PC-9 (cell line): ENCODE measurements at regions of chr1 and their contacts with region 1.

Region 1: GRCh38 chr1:21384620-21385019 is 55.3 kb upstream of the NBPF3 start:
- DNase-seq: peak in 1 of 2 experiments; percentile 50
- H3K4me3 ChIP-seq: no peak overlapping the region
- H3K27ac ChIP-seq: no peak overlapping the region
- H3K4me1 ChIP-seq: peaks cover 7% of the 10 kb centered on the region
- H3K27me3 ChIP-seq: no peaks in the 10 kb centered on the region
- CTCF ChIP-seq: no peak

Region 2: GRCh38 chr1:21012937-21013336 is 371.7 kb before region 1 on chr1:
- CTCF ChIA-PET with region 1: no interaction called
- POLR2A ChIA-PET with region 1: no interaction called
- intact Hi-C with region 1: no loop called
- DNase-seq: no peak
- H3K4me3 ChIP-seq: no peak overlapping the region
- H3K27ac ChIP-seq: no peak overlapping the region
- H3K4me1 ChIP-seq: no peaks in the 10 kb centered on the region
- H3K27me3 ChIP-seq: no peaks in the 10 kb centered on the region
- CTCF ChIP-seq: no peak

Region 3: DNA sequence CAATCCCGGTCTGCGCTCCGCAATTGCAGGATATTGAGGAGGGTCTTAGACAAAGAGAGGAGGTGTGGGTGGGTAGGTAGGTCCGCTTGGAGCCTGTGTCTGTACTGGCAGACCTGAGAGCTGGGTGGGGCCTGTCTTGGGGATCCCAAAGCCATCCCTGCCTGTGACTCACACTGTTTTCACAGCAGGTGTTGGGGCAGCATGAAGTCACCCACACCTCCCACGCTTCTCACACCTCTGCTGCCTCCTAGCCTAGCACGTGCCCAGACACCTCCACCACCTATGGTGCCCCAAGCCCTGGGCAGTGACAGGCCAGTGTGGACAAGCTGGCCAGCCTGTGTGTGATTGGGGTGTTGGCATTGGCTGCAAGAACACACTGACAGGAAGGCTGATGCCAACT is 28.7 kb before region 1 on chr1:
- CTCF ChIA-PET with region 1: no interaction called
- POLR2A ChIA-PET with region 1: no interaction called
- intact Hi-C with region 1: no loop called
- DNase-seq: peak; percentile 36 to 37
- H3K4me3 ChIP-seq: no peak overlapping the region
- H3K27ac ChIP-seq: no peak overlapping the region
- H3K4me1 ChIP-seq: no peaks in the 10 kb centered on the region
- H3K27me3 ChIP-seq: no peaks in the 10 kb centered on the region
- CTCF ChIP-seq: no peak

Region 4: GRCh38 chr1:22131875-22132486 is 747.4 kb after region 1 on chr1:
- CTCF ChIA-PET with region 1: interaction called, 17 read pairs
- POLR2A ChIA-PET with region 1: no interaction called
- intact Hi-C with region 1: no loop called
- DNase-seq: peak in 1 of 2 experiments; percentile 68
- H3K4me3 ChIP-seq: no peak overlapping the region
- H3K27ac ChIP-seq: no peak overlapping the region
- H3K4me1 ChIP-seq: peaks cover 10% of the 10 kb centered on the region
- H3K27me3 ChIP-seq: no peaks in the 10 kb centered on the region
- CTCF ChIP-seq: peak; percentile 89